HEK293T (cell line): ENCODE measurements at regions of chr16 and their contacts with region 1.

Region 1: GRCh38 chr16:3023669-3024478 is at the starts of genes HCFC1R1 and THOC6:
- DNase-seq: peak; percentile 85

Region 2: DNA sequence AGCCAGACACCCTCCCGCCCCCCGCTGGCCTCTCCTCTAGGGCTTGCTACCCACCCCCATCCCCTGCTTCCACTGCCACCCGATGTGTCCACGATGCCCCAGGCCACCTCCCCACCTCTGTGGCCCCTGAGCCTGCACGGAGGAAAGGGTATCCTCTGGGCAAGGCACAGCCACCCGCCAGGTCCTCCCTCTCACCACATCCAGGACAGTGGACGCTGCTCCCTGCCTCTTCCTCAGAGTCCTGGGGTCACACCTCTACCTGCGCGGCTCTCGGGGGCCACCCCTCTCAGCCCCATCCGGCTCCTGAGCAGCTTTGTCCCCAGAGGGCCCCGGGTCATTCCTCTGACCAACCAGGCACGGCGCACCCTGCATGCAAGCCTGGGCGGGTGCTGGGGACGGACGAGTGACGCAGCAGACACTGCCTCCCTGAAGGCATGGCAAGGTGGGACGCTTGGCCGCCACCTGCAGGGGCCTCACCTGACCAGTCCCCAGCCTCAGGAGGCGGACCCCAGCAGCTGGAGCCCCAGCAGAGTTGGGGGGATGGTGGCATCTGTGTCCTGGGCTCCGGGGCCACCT is 87.3 kb before region 1 on chr16:
- CTCF ChIA-PET with region 1: no interaction called
- POLR2A ChIA-PET with region 1: no interaction called
- DNase-seq: no peak

Region 3: DNA sequence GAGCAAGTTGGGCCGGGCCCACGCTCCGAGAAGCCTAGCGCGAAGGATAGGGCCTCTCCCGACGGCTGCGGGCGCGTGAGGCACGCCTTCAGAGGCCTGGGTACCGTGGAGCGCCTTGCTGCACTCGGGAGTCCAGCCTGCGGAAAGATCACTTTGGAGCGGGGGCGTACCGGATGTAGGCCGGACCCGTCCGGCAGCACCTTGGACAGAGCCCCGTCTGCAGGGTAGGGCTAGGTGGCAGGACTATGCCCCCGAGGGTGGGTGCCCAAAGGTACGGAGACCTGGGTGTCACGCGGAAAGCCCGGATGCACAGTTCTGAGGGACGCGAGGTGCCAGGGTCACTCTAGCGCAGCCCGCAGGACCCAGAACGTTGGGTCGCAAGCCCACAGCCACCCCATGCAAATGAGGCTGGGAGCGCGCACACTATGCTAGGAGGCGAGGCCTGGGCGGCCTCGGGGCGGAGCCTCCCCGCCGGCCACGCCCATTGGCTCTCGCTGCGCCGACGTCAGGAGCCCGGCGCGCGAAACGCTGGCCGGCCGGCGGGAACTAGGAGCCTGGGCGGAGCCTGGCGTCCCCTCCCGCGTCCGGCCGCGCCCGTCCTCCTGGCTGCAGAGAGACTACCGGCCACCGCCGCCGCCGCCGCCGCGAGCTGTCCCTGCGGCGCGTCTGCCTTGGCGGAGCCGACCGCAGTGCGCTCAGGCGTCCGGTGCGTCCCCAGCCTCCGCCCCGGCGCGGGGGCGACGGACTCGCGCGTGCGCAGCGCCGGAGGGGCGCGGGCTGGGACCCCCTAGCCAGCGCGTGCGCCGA is 54.9 kb before region 1 on chr16 and contains the start of gene PAQR4:
- CTCF ChIA-PET with region 1: interaction called, 5 read pairs
- POLR2A ChIA-PET with region 1: interaction called, 12 read pairs
- DNase-seq: peak; percentile 92

Region 4: DNA sequence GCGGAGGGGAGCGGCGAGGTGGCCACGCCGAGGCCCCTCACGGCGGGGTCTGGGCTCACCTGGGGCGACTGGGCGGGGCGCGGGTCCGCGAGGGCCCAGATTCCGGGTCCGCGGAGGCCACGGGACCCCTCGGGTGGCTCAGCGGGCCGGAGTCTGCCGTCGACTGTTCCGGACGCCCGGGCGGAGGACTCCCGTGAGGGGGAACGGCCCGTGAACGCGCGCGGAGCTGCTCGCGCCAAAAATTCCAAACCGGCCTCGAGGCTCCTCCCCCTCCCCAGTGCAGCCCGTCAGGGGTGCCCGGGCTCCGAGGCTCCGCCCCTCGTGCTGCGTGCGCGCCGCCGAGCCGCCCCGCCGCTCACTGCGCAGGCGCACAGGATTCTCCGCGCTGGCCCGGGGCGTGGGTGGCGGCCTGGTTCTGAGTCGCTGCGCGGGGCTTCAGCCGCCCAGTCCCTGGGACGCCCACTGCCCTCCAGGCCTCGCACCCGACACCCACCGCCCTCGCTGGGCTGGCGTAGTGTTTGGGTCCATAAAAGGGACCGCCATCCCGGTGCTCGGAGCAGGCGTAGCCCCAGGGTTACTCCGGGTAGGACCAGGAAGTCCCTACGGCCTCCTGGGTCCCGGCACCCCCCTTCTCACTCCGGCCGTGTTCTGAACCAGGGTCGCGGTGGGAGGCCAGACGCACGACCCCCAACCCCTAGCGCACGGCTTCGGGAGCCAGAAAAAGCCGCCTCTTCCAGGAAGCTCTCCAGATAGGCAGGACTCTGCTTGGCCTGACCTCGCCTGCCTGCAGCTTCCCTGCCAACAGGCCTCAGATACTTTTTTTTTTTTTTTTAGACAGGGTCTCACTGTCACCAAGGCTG is 43.4 kb before region 1 on chr16 and contains the start of gene PKMYT1:
- CTCF ChIA-PET with region 1: interaction called, 4 read pairs
- POLR2A ChIA-PET with region 1: interaction called, 10 read pairs
- DNase-seq: peak; percentile 99

Region 5: DNA sequence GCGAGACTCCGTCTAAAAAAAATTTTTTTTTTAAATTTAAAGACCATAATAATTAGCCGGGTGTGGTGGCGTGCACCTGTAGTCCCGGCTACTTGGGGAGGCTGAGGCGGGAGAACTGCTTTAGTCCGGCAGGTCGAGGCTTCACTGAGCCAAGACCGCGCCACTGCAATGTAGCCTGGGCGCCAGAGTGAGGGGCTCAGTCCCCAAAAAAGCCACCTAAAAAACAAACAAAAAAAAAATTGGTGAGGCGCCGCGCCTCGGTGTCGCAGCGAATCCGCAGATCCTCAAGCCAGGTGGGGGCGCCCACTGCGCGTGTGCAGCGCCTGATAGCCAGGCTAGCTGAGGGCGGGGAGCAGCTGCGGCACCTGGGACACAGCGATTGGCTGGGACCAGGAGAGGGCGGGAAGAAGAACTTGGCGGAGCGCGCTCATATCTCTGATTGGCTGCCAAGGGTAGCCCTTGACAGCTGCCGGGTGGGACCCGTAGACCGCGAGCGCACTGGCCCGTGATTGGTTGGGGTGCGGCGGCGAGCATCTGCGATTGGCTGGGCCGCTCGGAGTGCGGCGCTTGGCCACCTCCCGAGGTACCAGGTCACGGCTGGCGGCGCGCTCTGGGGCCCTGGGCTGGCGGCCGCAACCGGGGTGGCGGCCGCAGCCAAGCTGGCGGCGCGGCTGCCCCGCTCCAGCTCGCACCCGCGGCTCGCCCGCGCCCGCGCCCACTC is 20.1 kb before region 1 on chr16:
- CTCF ChIA-PET with region 1: interaction called, 20 read pairs
- POLR2A ChIA-PET with region 1: interaction called, 60 read pairs
- DNase-seq: peak; percentile 99

Region 6: GRCh38 chr16:3012828-3013420 is 10.9 kb before region 1 on chr16 and contains the start of gene CLDN9:
- CTCF ChIA-PET with region 1: interaction called, 13 read pairs
- POLR2A ChIA-PET with region 1: interaction called, 60 read pairs
- DNase-seq: no peak

Region 7: DNA sequence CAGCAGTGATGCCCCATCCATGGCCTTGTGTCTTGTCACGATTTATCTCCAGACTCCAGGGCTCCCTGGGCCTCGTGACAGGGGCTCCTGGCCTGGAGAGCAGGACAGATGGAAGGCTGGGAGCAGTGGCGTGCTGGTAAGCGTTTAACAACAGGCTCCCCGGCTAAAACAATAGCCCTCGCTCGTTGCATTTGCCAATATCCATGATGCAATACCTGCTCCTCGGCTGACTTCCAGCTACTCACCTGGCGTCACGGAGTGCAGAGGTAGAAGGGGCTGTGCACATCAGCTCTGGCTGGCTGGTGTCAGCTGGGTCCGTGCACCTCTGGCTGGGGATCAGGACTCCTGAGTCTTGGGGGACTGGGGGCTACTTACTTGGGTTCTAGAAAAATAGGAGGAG is 14.4 kb after region 1 on chr16:
- CTCF ChIA-PET with region 1: interaction called, 38 read pairs
- POLR2A ChIA-PET with region 1: interaction called, 10 read pairs
- DNase-seq: no peak